ENCODE measurements at regions of chr5 and their contacts with region 1.

Region 1: GRCh38 chr5:91383027-91383955 is at the start of gene ARRDC3:
- DNase-seq: peak; percentile 98
- total RNA-seq, gene ARRDC3: 45.4 to 80.2 TPM

Region 2: DNA sequence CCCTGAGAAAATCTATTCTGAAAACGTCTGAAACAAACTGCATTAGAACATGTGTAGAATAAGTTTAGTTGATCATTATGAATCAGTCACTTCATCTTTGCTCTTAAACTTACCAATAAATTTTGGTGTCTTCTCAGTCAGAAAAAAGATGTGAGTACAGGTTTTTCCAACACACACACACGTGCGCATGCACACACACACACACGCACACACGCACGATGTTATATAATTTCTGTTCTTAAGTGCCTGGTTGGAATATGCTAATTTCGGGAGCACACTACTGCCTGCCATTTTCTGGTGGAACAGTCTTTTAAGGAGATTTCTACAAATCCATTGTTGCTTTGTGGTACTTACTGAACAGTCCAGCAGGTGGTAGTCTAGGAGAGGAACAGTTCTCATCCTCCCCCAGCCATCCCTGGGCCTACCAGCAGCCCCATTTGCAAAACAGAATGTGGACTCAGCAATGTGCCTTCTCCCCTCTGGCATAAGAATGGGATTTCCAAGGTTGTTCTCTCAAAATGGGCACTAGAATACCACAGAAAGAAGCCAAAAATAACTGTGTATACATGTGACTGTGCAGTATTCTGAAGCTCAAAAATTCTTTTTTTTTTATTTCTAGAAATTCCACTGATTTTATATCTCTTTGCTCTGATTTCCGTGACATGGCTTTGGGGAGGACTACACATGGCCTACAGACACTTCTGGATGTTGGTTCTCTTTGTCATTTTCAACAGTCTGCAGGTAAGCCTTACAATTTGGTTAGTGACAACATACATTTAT is 281.5 kb before region 1 on chr5:
- intact Hi-C with region 1: loop called (anchors 5 to 10 kb)
- DNase-seq: peak; percentile 85

Region 3: GRCh38 chr5:91280362-91281269 is 102.7 kb before region 1 on chr5:
- intact Hi-C with region 1: loop called (anchors 5 to 10 kb)
- DNase-seq: peak; percentile 98

Region 4: DNA sequence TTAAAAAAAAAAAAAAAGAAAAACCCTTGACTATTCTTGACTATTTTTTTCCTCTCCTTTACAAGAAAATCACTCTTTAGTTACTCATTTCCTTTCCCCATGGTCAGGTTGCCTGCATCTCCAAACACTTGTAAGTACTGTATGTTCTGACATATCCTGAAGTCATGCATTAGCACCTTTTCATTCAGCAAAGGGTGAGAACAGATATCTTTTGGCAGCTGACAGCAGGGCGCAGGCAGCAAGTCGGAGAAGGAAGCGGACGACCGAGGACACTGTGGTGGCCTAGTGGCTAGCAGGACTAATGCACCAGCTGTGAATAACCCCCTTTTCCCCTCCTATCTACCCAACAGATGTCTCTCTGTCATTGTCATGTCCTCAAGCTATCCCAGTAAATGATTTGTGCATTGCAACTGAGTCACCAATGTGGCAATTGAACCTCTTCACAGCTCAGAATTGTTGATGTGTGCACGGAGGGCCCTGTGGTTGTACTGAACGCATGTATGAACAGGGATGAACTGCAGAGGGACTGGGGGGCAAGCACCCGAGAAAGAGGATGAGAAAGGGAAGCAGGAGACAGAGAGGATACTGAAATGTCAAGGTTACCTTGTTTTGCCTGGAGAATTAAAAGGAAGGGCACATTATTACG is 995.8 kb after region 1 on chr5:
- intact Hi-C with region 1: no loop called
- DNase-seq: no peak

Measured in posterior vena cava (tissue), 2 donors.